Activated B cell treated with CpG ODN at 0.5 μM for 24 hours (primary cell): ENCODE measurements at regions of chr19 and their contacts with region 1.

Region 1: GRCh38 chr19:37370880-37371661 is at the start of gene ZNF527:
- DNase-seq: peak; percentile 96
- ATAC-seq: peak; percentile 98
- H3K4me3 Mint-ChIP-seq: peak within 1 kb of the TSS; percentile 99
- H3K27ac Mint-ChIP-seq: peak within 1 kb of the TSS; percentile 98
- H3K4me1 Mint-ChIP-seq: peaks cover 14% of the 10 kb centered on the region
- H3K27me3 Mint-ChIP-seq: no peaks in the 10 kb centered on the region
- CTCF ChIP-seq: no peak
- total RNA-seq, gene ZNF527: 6.3 and 8.1 TPM in 2 replicates

Region 2: DNA sequence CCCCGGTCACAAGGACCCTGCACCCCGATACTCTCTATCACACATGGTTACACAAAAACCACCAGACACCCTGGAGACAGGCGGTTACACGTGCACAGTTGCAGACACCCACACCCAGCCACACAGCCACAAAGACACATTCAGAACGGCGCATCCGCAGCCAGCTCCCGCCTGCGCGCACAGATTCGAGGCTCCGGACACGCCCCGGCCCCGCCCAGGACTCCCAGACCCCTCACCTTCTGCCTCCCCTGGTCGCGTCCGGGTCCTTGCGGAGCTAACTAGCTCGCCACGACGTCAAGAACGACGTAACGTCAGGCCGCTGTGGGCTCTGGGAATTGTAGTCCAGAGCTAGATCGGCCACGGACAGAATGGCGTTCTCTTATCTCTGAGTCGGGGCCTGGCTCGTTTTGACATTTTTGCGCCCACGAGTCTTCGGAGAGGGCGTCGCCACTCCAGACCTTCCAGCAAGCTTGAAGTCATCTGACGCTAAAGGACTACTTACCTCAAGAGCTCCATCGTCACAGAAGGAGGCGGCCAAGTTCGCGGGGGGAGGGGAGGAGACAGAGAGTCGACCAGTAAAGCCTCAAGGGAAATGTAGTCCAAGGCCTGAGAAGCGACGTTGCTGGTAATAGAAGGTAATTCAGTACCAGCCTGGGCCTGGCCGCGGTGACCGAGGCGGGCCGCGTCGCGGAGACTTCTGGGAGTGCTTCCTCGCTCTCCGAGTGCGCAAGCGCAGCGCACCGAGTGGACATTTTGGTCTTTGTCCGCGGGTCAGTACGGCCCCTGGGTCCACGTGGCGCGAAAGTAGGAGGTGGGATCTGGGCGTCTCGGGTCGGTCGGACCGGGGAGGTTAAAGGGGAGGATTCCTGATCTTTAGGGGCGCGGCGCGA is 1156.4 kb before region 1 on chr19 and contains the starts of genes ZNF146 and ZNF565:
- CTCF ChIA-PET with region 1: no interaction called
- POLR2A ChIA-PET with region 1: interaction called, 3 read pairs
- intact Hi-C with region 1: loop called (anchors 1 kb)
- DNase-seq: peak; percentile 90
- ATAC-seq: peak; percentile 90
- H3K4me3 Mint-ChIP-seq: no peak within 1 kb of the TSS
- H3K27ac Mint-ChIP-seq: no peak within 1 kb of the TSS
- H3K4me1 Mint-ChIP-seq: peaks cover 29% of the 10 kb centered on the region
- H3K27me3 Mint-ChIP-seq: no peaks in the 10 kb centered on the region
- CTCF ChIP-seq: no peak
- total RNA-seq, gene ZNF146: 57.8 and 63.2 TPM in 2 replicates
- total RNA-seq, gene ZNF565: 2.3 and 3.2 TPM in 2 replicates

Region 3: DNA sequence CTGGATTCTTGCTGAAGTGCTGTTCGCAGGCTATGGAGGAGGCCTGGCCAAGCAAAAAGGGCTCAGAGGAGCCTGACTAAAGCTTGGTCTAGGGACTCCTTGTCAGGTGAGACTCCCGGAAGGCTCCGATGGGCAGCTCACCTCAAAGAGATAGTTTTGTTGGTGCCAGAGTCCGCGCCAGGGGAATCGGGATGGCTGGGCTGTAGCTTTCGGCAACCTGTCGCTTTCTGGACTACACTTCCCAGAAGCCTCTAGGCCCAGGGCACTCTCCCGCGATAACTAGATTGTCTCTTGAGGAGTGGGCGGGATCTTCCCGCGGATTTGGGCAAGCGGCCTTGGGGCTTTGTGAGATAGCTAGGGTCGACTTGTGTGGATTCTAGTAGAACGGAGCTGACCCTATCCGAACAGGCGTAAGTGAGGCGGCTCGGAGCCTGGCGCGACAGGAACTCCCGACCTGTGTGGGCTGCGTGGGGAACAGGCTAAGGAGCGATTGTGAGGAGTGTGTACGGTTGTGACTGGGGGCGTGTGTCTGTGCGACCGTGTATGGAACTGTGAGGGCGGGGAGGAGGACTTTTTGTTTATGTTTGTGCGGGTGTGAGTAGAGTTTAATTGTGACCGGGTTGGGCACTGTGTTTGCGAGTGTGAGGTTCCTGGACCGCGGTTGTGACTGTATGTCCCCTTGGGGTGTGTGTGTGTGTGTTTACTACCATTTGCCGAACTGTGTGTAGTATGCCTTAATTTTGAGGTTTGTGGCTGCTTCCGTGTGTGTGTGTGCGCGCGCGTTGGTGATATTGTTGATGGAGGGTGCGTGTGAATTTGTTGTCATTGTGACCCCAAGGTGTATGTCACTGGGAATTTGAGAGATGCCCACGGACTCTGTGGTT is 520.3 kb before region 1 on chr19 and contains the start of gene ZNF345:
- CTCF ChIA-PET with region 1: no interaction called
- POLR2A ChIA-PET with region 1: interaction called, 6 read pairs
- intact Hi-C with region 1: loop called (anchors 2 kb)
- DNase-seq: peak; percentile 71
- ATAC-seq: peak; percentile 83
- H3K4me3 Mint-ChIP-seq: no peak within 1 kb of the TSS
- H3K27ac Mint-ChIP-seq: no peak within 1 kb of the TSS
- H3K4me1 Mint-ChIP-seq: peaks cover 9% of the 10 kb centered on the region
- H3K27me3 Mint-ChIP-seq: no peaks in the 10 kb centered on the region
- CTCF ChIP-seq: no peak
- total RNA-seq, gene ZNF345: 7.8 and 9.5 TPM in 2 replicates

Region 4: DNA sequence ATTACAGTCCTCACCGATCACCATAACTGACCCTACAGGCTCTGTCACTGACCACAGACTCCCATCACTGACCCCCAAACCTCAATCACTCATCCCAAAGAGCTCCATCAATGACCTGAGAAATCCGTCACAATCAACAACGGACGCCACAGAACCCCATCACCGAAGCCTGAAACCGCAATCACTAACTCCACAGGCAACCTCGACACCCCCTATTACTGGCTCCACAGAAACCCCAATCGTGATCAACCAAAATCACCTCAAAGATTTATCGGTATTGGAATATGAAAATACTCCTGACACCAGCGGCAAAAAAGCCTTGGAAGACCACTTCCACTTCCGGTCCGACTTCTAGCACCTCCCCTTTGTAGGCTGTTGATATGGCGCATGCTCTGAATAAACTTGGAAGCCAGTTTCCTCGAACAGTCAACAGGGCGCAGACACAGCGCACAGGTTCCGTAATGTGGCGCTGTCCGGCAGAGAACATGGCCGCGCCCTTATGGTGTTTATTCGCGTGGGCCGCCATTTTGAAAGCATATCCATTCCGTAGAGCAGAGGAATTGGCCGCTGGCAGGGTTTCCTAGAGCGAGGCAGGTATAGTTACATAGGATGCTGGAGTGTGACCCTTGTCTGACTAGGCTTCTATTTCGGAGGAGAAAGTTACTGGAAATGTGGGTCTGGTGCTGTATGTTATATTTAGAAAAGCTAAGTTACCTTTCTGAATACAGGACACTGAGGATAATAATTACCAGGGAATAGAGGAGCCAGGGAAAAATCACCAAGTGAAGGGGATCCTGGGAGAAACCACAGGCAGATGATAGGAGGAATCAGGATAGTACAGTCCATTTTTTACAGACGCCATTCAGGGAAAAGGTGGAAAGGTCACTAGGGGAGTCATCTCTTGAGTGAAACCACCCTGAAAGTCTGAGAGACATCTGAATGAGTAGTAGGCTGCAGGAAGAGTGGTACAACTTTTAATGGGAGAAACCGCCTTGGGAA is 198.4 kb before region 1 on chr19 and contains the start of gene ZNF585A:
- CTCF ChIA-PET with region 1: no interaction called
- POLR2A ChIA-PET with region 1: interaction called, 3 read pairs
- intact Hi-C with region 1: loop called (anchors 1 kb)
- DNase-seq: peak; percentile 77
- ATAC-seq: peak; percentile 99
- H3K4me3 Mint-ChIP-seq: peak within 1 kb of the TSS; percentile 52
- H3K27ac Mint-ChIP-seq: no peak within 1 kb of the TSS
- H3K4me1 Mint-ChIP-seq: peaks cover 4% of the 10 kb centered on the region
- H3K27me3 Mint-ChIP-seq: no peaks in the 10 kb centered on the region
- CTCF ChIP-seq: no peak
- total RNA-seq, gene ZNF585A: 14.4 and 17.0 TPM in 2 replicates

Region 5: DNA sequence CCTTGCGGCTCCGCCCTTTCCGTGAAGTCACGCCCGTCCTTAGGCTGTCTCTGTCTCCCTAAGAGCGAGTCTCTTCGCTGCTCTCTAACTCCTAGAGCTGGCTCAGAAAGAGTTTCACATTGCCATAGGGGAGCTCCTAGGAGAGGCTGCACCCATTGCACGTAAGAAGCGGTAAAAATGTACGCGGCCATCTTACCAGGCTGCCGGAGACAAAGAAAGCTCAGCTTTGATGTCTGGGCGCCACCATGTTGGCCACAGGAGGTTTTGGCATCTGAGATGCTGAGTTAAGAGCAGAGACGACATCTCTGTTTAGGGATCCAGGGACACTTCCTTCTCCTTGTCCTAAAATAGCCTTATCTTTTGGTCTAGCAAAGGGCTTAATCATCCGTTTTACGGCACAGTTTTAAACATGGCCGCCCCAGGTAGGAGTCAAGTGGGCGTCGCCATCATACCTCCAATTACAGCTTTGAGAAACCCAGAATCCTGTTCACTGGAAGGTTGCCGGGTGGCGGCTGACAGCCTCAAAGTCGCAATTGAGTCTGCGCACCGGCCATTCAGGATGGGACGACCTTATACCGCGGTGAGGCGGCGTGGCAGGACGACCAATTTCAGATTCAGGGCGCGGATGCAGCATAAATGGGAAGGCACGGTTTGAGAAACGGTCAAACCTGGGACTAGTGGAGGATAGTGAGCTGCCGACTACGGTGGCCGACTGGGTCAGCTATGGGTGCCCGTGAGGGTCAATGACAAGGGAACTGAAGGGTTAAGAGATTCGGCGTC is 135.5 kb after region 1 on chr19 and contains the start of gene ZNF793:
- CTCF ChIA-PET with region 1: no interaction called
- POLR2A ChIA-PET with region 1: interaction called, 37 read pairs
- intact Hi-C with region 1: loop called (anchors 1 kb)
- DNase-seq: peak; percentile 70
- ATAC-seq: peak; percentile 87
- H3K4me3 Mint-ChIP-seq: no peak within 1 kb of the TSS
- H3K27ac Mint-ChIP-seq: no peak within 1 kb of the TSS
- H3K4me1 Mint-ChIP-seq: peaks cover 2% of the 10 kb centered on the region
- H3K27me3 Mint-ChIP-seq: no peaks in the 10 kb centered on the region
- CTCF ChIP-seq: no peak
- total RNA-seq, gene ZNF793: 8.4 and 8.7 TPM in 2 replicates

Region 6: DNA sequence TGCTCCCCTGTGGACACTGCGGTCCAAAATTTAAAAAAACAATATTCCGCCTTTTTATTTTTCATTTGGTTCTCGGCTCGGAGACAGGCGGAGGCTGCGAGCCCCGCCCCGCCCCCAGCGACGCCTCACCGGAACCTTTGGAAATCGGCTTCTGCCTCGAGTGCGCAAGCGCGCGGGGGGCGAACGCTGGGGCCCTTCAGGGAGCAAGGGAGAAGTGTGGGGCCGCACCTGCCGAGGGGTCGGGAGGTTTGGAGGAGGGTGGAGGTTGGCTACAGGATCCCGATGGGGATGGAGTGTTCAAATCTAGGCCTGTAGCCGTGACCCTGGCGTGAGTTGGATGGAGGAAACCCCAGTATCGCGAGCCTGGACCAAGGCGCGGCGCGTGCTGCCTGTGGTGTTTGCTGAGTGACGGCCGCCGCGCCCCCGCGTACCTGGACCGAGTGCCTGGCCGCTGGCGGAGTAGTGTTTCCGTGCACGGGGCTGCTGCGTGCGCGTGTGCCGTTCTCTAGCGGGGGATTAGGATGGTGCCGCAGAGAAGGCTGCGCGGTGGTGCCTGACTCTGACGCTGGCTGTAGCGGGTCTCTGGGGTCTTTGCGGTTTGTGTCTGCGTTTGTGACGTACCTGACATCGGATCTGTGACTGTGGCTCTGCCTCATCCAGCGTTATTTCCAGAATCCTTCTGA is 284.8 kb after region 1 on chr19:
- CTCF ChIA-PET with region 1: no interaction called
- POLR2A ChIA-PET with region 1: interaction called, 3 read pairs
- intact Hi-C with region 1: loop called (anchors 1 kb)
- DNase-seq: peak; percentile 80
- ATAC-seq: peak; percentile 67
- H3K4me3 Mint-ChIP-seq: peak overlapping the region; percentile 95
- H3K27ac Mint-ChIP-seq: peak overlapping the region; percentile 95
- H3K4me1 Mint-ChIP-seq: peaks cover 28% of the 10 kb centered on the region
- H3K27me3 Mint-ChIP-seq: no peaks in the 10 kb centered on the region
- CTCF ChIP-seq: no peak